ENCODE measurements at regions of chr2 and their contacts with region 1.

Region 1: DNA sequence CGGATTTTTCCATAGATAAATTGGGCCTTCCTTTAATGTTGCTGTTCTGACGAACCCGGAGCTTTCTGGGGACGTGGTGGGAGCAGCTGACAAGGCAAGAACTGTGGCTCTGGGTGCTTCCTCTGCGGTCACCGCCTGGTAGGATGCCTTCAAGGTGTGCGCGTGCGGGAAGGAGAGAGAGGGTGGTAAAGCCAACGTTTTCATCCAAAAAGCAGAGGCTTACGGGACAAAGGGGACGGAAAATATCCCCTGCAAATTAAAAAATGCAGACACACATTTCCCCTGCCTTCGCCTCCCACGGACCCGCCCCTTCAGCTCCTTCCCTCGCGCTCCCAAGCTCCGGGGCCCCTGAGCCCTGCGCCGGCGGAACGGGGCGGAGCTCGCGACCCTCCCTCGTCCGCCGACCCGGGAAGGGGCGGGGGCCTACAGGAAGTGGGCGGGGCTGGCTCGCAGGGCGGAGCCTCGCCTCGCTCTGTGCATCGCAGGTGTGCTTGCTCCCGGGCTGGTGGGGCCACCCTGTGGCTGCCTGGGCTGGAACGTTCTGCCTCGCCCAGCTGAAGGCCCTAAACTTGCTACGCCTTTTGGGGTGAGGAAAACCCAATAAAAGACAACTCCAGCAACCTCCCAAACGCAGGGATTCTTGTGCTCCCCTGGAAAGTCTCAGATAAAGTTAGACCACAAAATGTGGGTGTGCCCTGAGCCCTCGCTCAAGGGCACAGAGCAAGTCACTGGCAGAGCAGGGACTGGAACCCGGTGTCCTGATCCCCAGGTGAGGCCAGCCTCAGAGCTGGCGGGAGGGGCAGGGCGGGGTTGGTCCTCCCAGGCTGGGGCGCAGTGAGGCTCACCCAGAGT is 25.4 kb upstream of the SLC66A3 start:
- DNase-seq: peak; percentile 72
- ATAC-seq: peak; percentile 65
- H3K4me3 ChIP-seq: peak overlapping the region; percentile 55; the same call in 1 of the 2 replicates
- H3K27ac ChIP-seq: no peak overlapping the region
- H3K4me1 ChIP-seq: peaks cover 21% of the 10 kb centered on the region
- H3K27me3 ChIP-seq: no peaks in the 10 kb centered on the region
- CTCF ChIP-seq: peak; percentile 65

Region 2: DNA sequence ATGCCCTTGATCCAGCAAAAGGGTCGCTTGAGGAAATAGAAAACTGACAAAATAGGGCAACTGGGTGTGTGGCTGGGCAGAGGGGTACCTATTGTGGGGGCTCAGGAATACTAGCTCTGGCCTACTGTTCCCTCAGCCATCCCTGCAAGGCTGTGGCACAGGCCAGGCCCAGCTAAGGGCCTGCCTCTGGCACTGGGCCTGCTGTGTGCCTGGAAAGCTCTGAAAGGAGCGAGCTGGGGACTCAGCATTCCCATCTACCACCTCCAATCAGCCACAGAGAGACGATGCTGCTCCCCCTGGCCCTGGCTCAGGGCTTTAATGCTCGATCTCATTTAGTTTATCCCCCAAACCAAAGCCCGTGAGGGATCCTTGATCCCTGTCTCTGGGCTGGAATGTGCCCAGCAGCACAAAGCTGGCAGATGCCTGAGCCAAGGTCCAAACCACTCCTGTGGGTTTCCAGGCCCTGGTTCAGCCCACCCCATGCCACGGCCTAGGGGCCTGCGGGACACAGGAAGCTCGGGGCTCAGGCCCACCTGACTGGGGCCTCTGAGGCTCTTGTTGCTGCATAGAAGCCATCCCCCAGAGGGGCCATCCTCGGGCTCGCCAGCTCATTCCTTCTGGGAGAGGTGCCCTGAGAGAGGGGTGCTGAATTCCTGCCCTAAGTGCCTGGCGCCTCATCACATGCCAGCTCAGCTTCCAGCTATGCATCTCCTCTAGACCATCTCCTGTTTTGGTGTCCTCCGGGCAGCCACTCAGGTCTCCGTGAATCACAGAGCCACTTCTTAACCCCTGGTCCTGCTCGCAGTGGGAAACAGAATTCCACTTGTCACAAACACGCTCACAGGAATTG is 261.1 kb before region 1 on chr2:
- CTCF ChIA-PET with region 1: interaction called, 14 read pairs
- POLR2A ChIA-PET with region 1: no interaction called
- intact Hi-C with region 1: no loop called
- DNase-seq: peak; percentile 78
- ATAC-seq: peak; percentile 83
- H3K4me3 ChIP-seq: no peak overlapping the region
- H3K27ac ChIP-seq: no peak overlapping the region
- H3K4me1 ChIP-seq: peaks cover 19% of the 10 kb centered on the region
- H3K27me3 ChIP-seq: no peaks in the 10 kb centered on the region
- CTCF ChIP-seq: no peak

Region 3: DNA sequence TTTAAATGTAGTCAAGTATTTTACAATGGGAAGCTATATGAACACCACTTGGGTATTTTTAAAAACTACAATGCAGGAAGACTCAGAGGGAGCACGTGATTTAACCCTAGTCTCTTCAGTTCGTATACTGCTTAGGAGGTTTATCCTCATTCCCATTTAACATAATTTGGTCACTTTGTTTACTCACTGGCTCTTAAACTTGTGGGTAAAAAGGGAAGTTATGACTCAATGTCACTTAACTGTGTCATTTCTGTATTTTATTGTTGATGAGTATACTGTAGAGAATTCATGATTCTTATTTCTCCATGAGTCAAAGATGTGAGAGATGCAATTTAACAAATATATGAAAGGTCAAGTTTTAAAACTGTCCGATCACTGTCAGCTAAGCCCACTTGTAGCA is 73.7 kb after region 1 on chr2:
- CTCF ChIA-PET with region 1: no interaction called
- POLR2A ChIA-PET with region 1: no interaction called
- intact Hi-C with region 1: loop called (anchors 5 kb)
- DNase-seq: peak; percentile 96
- ATAC-seq: peak; percentile 94
- H3K4me3 ChIP-seq: no peak overlapping the region
- H3K27ac ChIP-seq: peak overlapping the region; percentile 67
- H3K4me1 ChIP-seq: peaks cover 24% of the 10 kb centered on the region
- H3K27me3 ChIP-seq: no peaks in the 10 kb centered on the region
- CTCF ChIP-seq: no peak

Region 4: DNA sequence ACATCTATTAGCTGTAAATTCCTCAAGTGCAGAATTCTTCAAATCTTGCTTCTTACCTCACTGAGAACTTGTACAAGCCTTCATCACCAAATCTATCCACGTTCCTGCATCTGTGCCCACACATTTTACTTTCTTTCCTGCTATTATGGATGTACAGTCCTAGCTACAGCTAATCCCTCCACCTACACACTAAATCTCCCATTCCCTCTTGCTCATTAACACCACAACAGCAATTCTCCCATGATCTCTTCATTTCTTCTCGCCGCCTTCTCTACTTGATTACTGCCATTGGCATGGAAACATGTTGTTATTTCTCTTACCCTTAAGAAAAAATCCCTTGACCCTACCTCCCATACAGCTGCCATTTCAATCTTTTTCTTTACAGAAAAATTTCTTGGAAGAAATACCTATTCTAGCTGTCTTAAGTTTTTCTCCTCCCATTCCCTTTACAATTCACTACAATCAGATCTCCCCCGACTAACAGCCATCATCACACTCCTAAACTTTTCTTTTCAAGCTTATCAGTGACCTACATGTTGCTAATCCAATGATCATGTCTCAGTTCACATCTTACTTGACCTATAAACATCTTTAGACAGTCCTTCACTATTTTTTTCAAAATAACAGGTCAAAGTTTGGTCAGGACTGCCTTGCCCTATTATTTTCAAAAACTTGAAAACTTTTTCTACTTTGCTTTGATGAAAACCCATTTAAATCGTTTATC is 173.6 kb after region 1 on chr2:
- CTCF ChIA-PET with region 1: no interaction called
- POLR2A ChIA-PET with region 1: no interaction called
- intact Hi-C with region 1: no loop called
- DNase-seq: no peak
- ATAC-seq: no peak
- H3K4me3 ChIP-seq: no peak overlapping the region
- H3K27ac ChIP-seq: no peak overlapping the region
- H3K4me1 ChIP-seq: peaks cover 13% of the 10 kb centered on the region
- H3K27me3 ChIP-seq: no peaks in the 10 kb centered on the region
- CTCF ChIP-seq: no peak

Region 5: DNA sequence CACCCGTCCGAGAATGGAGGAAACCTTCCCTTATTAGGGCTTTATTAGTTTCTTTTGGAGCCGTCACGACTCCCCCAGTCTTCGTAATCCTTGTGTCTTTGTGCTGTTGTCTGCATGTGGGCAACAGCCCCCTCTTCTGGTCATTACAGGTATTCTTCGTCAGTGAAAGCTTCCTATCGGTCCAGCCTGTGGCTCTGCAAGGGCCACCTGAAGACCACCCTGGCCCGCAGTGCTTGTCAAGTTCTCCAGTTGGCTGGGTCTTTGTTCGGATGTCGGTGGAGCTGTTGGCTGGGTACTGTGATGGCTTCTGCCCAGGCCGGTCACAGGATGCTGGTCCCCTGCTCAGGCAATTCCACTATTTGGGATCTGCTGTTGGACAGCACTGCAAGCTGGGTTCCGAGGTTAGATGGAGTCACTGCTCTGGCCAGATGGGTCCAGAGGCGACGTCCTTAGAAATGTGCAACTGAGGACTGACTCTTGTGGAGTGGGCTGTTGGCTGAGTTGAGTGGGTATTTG is 317.0 kb after region 1 on chr2:
- CTCF ChIA-PET with region 1: no interaction called
- POLR2A ChIA-PET with region 1: no interaction called
- intact Hi-C with region 1: loop called (anchors 5 kb)
- DNase-seq: peak; percentile 66
- ATAC-seq: peak; percentile 70
- H3K4me3 ChIP-seq: no peak overlapping the region
- H3K27ac ChIP-seq: no peak overlapping the region
- H3K4me1 ChIP-seq: no peaks in the 10 kb centered on the region
- H3K27me3 ChIP-seq: no peaks in the 10 kb centered on the region
- CTCF ChIP-seq: peak; percentile 93

Region 6: GRCh38 chr2:11669454-11670291 is 539.8 kb after region 1 on chr2 and contains the start of gene NTSR2:
- CTCF ChIA-PET with region 1: no interaction called
- POLR2A ChIA-PET with region 1: no interaction called
- intact Hi-C with region 1: loop called (anchors 10 kb)
- DNase-seq: no peak
- ATAC-seq: peak; percentile 45
- H3K4me3 ChIP-seq: no peak within 1 kb of the TSS
- H3K27ac ChIP-seq: no peak within 1 kb of the TSS
- H3K4me1 ChIP-seq: peaks cover 24% of the 10 kb centered on the region
- H3K27me3 ChIP-seq: no peaks in the 10 kb centered on the region
- CTCF ChIP-seq: no peak
- total RNA-seq, gene NTSR2: not detected in 2 replicates

Measured in PC-3 (cell line).